Naive thymus-derived CD4-positive, alpha-beta T cell (primary cell): ENCODE measurements at regions of chr7 and their contacts with region 1.

Region 1: DNA sequence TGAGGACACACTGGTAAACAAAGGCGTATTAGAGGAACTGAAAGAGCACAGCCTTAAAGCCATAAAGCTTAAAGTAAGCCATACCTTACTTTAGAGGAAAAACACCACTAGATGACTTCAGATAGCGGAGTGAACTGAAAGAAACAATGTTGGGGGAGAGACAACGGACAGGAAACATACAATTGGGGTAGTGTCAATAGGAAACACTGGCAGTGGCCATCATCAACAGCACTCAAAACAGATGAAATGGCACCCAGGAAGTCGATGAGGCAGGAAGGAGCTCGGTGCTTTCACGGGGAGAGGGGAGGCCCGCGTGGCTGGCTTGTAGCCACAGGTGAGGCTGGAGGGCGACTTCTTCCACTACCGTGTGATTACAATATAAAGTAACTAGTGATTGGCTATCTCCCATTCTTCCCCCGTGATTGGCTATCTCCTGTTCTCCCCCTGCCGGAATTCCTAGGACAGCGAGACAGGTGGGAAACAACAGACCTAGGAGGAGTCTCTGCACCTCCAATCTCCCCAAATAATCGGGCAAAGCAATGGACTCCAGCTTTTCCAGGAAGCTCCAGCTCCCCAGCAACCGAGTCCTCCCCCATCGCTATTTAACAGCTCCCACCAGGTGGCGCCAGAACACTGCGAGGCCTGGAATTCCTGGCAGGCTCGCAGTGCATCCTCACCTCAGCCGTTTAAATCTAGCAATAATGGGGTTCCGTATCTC is 2.4 kb upstream of the TAS2R38 start:
- DNase-seq: peak; percentile 31 to 72 (median 59)
- ATAC-seq: peak; percentile 84
- H3K4me3 ChIP-seq: peak overlapping the region; percentile 73
- H3K4me3 Mint-ChIP-seq: peak overlapping the region; percentile 57 to 88 (median 82)
- H3K27ac ChIP-seq: no peak overlapping the region
- H3K27ac Mint-ChIP-seq: peak overlapping the region in 8 of 9 donors; percentile 38 to 91 (median 76)
- H3K4me1 ChIP-seq: peaks cover 0 to 12% of the 10 kb centered on the region in 2 donors
- H3K4me1 Mint-ChIP-seq: peaks cover 6 to 29% (median 13%) of the 10 kb centered on the region in 7 donors
- H3K27me3 ChIP-seq: no peaks in the 10 kb centered on the region
- H3K27me3 Mint-ChIP-seq: no peaks in the 10 kb centered on the region

Region 2: GRCh38 chr7:141397236-141398163 is 578.5 kb before region 1 on chr7:
- CTCF ChIA-PET with region 1: no interaction called
- POLR2A ChIA-PET with region 1: no interaction called
- intact Hi-C with region 1: no loop called
- DNase-seq: no peak
- ATAC-seq: no peak
- H3K4me3 ChIP-seq: no peak overlapping the region
- H3K4me3 Mint-ChIP-seq: no peak overlapping the region
- H3K27ac ChIP-seq: no peak overlapping the region
- H3K27ac Mint-ChIP-seq: no peak overlapping the region
- H3K4me1 ChIP-seq: no peaks in the 10 kb centered on the region
- H3K4me1 Mint-ChIP-seq: no peaks in the 10 kb centered on the region
- H3K27me3 ChIP-seq: no peaks in the 10 kb centered on the region
- H3K27me3 Mint-ChIP-seq: peaks cover 14 to 44% (median 21%) of the 10 kb centered on the region in 5 donors

Region 3: DNA sequence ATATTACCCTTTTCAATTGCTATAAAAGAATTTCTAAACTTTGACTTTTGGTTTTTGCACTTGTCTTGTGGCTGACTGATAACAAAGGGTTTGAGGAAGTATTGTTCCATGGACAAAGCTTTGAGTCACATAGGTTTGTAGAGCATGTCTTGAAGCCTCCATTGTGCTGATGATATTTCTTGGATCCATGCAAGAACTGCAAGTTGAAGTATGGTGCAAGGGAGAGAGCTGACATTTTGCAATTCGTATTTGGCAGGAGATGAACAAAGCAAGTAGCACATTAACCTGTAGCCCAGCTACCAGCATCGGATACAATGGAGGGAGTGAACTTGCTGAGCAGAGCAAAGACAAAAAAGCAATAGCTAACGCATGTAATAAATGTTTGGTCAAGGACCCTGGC is 158.9 kb after region 1 on chr7:
- CTCF ChIA-PET with region 1: no interaction called
- POLR2A ChIA-PET with region 1: no interaction called
- intact Hi-C with region 1: loop called in 1 of 2 experiments (anchors 5 kb)
- DNase-seq: peak in 1 of 9 donors; percentile 10
- ATAC-seq: no peak
- H3K4me3 ChIP-seq: no peak overlapping the region
- H3K4me3 Mint-ChIP-seq: no peak overlapping the region
- H3K27ac ChIP-seq: no peak overlapping the region
- H3K27ac Mint-ChIP-seq: no peak overlapping the region
- H3K4me1 ChIP-seq: no peaks in the 10 kb centered on the region
- H3K4me1 Mint-ChIP-seq: no peaks in the 10 kb centered on the region
- H3K27me3 ChIP-seq: no peaks in the 10 kb centered on the region
- H3K27me3 Mint-ChIP-seq: peaks cover 0 to 14% (median 4%) of the 10 kb centered on the region in 5 donors

Region 4: GRCh38 chr7:142153400-142153799 is 177.4 kb after region 1 on chr7:
- CTCF ChIA-PET with region 1: no interaction called
- POLR2A ChIA-PET with region 1: no interaction called
- intact Hi-C with region 1: no loop called
- DNase-seq: no peak
- ATAC-seq: no peak
- H3K4me3 ChIP-seq: no peak overlapping the region
- H3K4me3 Mint-ChIP-seq: no peak overlapping the region
- H3K27ac ChIP-seq: no peak overlapping the region
- H3K27ac Mint-ChIP-seq: no peak overlapping the region
- H3K4me1 ChIP-seq: no peaks in the 10 kb centered on the region
- H3K4me1 Mint-ChIP-seq: no peaks in the 10 kb centered on the region
- H3K27me3 ChIP-seq: no peaks in the 10 kb centered on the region
- H3K27me3 Mint-ChIP-seq: peaks cover 0 to 15% (median 5%) of the 10 kb centered on the region in 5 donors

Region 5: DNA sequence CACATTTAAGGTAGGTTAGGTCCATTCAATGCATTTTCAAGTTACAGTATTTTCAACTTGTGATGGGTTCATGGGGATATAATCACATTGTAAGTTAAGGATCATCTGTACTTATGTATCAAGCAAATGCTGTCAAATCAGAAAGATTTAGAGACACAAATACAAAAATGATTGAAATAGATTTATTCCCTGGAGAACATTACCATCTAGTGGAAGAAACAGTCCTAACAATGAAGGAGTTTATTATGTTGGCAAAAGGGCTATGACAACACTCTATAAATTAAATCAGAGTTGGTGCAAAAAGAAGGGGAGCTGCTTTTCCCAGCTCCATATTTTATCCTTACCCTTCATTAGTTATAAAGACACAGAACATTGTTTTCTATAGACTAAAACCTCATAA is 212.9 kb after region 1 on chr7:
- CTCF ChIA-PET with region 1: no interaction called
- POLR2A ChIA-PET with region 1: no interaction called
- intact Hi-C with region 1: loop called (anchors 1 kb)
- DNase-seq: no peak
- ATAC-seq: no peak
- H3K4me3 ChIP-seq: no peak overlapping the region
- H3K4me3 Mint-ChIP-seq: no peak overlapping the region
- H3K27ac ChIP-seq: no peak overlapping the region
- H3K27ac Mint-ChIP-seq: no peak overlapping the region
- H3K4me1 ChIP-seq: no peaks in the 10 kb centered on the region
- H3K4me1 Mint-ChIP-seq: peaks cover 0 to 8% (median 0%) of the 10 kb centered on the region in 7 donors
- H3K27me3 ChIP-seq: no peaks in the 10 kb centered on the region
- H3K27me3 Mint-ChIP-seq: peaks cover 6 to 24% (median 15%) of the 10 kb centered on the region in 5 donors

Region 6: GRCh38 chr7:142301923-142302550 is 326.1 kb after region 1 on chr7:
- CTCF ChIA-PET with region 1: interaction called, 9 read pairs
- POLR2A ChIA-PET with region 1: no interaction called
- intact Hi-C with region 1: loop called (anchors 1 kb)
- DNase-seq: peak in 1 of 9 donors; percentile 34
- ATAC-seq: no peak
- H3K4me3 ChIP-seq: no peak overlapping the region
- H3K4me3 Mint-ChIP-seq: peak overlapping the region in 2 of 10 donors; percentile 17 to 49
- H3K27ac ChIP-seq: no peak overlapping the region
- H3K27ac Mint-ChIP-seq: no peak overlapping the region
- H3K4me1 ChIP-seq: peaks cover 0 to 28% of the 10 kb centered on the region in 2 donors
- H3K4me1 Mint-ChIP-seq: peaks cover 7 to 52% (median 35%) of the 10 kb centered on the region in 7 donors
- H3K27me3 ChIP-seq: no peaks in the 10 kb centered on the region
- H3K27me3 Mint-ChIP-seq: peaks cover 4 to 25% (median 16%) of the 10 kb centered on the region in 5 donors